ENCODE measurements at regions of chr1 and their contacts with region 1.

Region 1: DNA sequence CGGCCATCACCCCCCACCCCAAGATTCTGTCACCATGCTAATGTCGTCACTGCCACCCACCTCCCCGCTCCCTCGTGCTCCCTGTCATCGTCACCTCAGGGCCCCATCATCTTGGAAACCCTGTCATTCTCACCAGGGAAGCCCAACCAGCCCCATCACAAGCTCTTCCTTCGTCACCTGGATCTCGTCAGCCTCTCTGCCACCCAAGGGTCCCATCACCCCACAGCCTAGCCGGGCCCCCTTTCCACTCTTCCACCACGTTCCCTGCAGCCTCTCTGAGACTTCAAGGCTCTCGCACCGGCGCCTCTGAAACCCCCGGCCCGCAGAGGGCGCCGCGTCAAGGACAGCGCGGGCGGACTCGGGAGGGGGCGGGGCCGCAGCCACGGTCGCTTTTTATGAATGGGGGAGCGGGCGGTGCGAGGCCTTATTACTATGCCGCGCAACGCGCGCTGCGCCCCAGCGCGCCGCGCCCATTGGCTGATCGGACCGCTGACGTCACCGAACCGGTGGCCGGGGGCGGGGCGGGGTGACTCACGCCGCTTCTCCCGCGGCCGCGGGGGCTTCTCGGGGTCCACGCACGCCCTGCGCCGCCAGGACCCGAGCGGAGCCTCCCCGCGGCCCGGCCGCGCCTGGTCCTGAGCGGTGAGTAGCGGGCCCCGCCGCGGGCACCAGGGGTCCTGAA is at the start of gene GPR3:
- DNase-seq: peak; percentile 84
- H3K4me3 ChIP-seq: peak within 1 kb of the TSS; percentile 54 to 73 (median 64)
- H3K27ac ChIP-seq: peak within 1 kb of the TSS; percentile 86
- H3K4me1 ChIP-seq: peaks cover 26% of the 10 kb centered on the region
- H3K27me3 ChIP-seq: no peaks in the 10 kb centered on the region
- CTCF ChIP-seq: peak in 1 of 2 donors; percentile 54
- total RNA-seq, gene GPR3: 0.50 to 2.3 TPM

Region 2: DNA sequence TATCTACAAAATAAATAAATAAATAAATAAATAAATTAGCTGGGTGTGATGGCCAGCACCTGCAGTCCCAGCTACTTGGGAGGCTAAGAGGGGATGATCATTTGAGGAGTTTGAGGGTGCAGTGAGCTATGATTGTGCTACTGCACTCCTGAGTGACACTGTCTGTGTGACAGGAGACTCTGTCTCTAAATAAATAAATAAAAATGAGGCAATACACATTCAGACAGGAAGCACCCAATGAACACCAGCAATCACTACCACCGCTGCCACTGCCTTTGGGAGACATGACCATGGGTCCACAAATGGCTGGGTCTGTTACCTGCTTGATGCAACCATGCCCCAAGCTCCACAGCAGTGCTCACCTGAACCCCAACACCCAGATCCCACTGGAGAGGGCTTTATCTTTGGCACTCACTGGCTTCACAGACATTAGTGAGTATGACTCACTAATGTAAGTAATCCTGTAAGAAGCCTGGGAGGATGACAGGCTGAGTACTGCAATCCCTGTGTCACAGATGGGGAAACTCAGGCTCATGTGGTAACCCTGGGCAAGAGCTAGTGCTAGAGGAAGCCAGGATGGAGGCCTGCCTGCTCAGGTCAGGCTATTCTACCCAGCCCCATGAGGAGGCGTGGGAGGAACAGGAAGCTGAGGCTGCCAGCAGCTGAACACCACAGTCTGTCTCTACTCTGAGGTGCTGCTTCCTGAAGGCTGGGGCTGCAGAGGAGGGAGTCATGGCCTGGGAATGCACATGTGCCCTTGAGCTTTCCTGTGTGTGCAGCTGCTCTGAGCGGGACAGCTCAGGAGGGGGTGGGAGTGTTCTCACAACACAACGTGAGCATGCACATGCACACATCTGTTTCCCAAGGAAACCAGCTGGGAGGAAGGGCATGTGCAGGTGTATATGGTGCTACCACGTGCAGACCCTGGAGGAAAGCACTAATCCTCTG is 280.3 kb before region 1 on chr1:
- CTCF ChIA-PET with region 1: interaction called, 3 read pairs
- dilution Hi-C with region 1: no loop called
- in situ Hi-C with region 1: loop called in 1 of 2 experiments (anchors 25 kb)
- intact Hi-C with region 1: no loop called
- DNase-seq: peak; percentile 100
- H3K4me3 ChIP-seq: no peak overlapping the region
- H3K27ac ChIP-seq: peak overlapping the region; percentile 43
- H3K4me1 ChIP-seq: peaks cover 35% of the 10 kb centered on the region
- H3K27me3 ChIP-seq: no peaks in the 10 kb centered on the region
- CTCF ChIP-seq: peak; percentile 8 to 65

Region 3: GRCh38 chr1:27292106-27292505 is 100.1 kb before region 1 on chr1:
- CTCF ChIA-PET with region 1: no interaction called
- dilution Hi-C with region 1: loop called (anchors 5 kb)
- in situ Hi-C with region 1: no loop called
- intact Hi-C with region 1: no loop called
- DNase-seq: peak; percentile 45
- H3K4me3 ChIP-seq: no peak overlapping the region
- H3K27ac ChIP-seq: no peak overlapping the region
- H3K4me1 ChIP-seq: peaks cover 6% of the 10 kb centered on the region
- H3K27me3 ChIP-seq: no peaks in the 10 kb centered on the region
- CTCF ChIP-seq: no peak

Region 4: GRCh38 chr1:27332536-27333281 is 59.5 kb before region 1 on chr1:
- CTCF ChIA-PET with region 1: no interaction called
- dilution Hi-C with region 1: loop called (anchors 5 kb)
- in situ Hi-C with region 1: no loop called
- intact Hi-C with region 1: loop called (anchors 1 kb)
- DNase-seq: no peak
- H3K4me3 ChIP-seq: no peak overlapping the region
- H3K27ac ChIP-seq: no peak overlapping the region
- H3K4me1 ChIP-seq: no peaks in the 10 kb centered on the region
- H3K27me3 ChIP-seq: no peaks in the 10 kb centered on the region
- CTCF ChIP-seq: peak; percentile 86 to 90

Region 5: DNA sequence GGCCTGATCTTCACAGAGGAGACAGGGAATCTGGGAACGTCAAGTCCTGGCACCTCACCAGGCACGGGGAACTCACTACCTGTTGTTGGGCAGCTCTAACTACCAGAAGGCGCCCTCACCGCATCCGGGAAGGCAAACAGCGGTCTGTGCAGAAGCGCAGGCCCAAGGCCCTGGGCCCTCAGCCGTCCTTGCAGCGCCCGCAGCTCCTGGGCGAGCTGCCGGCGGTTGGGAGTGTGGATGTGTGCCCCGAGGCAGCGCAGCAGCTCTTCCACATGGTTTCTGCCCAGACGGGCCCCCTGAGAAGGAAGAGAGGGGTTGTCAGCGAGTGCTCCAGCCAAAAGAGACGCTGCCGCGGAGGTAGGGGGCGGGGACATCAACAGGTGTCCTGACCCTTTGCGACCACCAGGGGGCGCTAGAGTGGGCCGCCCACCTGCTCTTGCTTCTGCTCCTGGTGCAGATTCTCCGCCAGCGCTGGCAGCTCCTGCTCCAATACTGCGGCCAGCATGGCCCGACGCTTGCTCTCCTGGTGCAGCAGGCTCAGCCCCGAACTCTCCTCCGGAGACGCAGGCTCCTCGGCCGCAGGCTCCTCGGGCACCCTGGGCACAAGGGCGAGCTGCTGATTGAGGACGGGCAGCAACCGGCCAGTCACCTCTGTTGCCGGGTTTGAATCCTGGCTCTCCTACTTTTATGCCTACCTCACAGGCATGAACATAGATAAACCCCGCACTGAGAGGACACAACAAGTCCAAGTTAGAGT is 34.8 kb before region 1 on chr1:
- CTCF ChIA-PET with region 1: no interaction called
- dilution Hi-C with region 1: no loop called
- in situ Hi-C with region 1: no loop called
- intact Hi-C with region 1: loop called (anchors 1 kb)
- DNase-seq: no peak
- H3K4me3 ChIP-seq: no peak overlapping the region
- H3K27ac ChIP-seq: no peak overlapping the region
- H3K4me1 ChIP-seq: no peaks in the 10 kb centered on the region
- H3K27me3 ChIP-seq: no peaks in the 10 kb centered on the region
- CTCF ChIP-seq: peak; percentile 78 to 90

Region 6: DNA sequence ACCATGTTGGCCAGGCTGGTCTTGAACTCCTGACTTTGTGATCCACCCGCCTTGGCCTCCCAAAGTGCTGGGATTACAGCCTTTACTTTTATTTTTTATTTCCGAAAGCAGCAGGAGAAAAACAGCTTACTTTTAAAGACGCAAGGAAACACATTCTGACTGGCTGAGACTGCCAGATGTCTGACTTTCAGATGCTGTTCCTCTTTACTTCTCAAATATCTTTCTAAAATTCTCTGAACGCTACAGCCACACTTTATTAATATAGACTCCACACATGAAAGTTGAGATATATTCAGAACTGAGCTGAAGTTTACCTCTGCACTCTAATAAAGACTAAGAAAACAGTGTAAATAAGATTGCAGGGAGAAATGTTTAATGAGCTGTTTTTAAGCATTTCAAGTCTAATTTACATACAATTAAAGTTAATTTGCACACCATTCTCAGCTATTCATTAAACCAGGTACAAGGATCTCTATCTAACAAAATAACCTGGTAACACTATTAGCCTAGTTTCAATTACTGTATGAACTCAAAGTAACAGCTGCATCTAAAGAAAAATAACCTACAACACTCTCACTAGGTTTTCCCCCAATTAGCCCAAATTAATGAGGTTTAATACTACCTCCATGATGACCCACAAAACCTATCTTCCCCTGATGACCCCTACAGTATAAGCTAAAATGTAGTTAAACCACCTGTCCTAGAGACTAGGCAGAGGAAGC is 72.8 kb after region 1 on chr1:
- CTCF ChIA-PET with region 1: no interaction called
- dilution Hi-C with region 1: no loop called
- in situ Hi-C with region 1: no loop called
- intact Hi-C with region 1: no loop called
- DNase-seq: no peak
- H3K4me3 ChIP-seq: no peak overlapping the region
- H3K27ac ChIP-seq: no peak overlapping the region
- H3K4me1 ChIP-seq: peaks cover 4% of the 10 kb centered on the region
- H3K27me3 ChIP-seq: no peaks in the 10 kb centered on the region
- CTCF ChIP-seq: no peak

Region 7: DNA sequence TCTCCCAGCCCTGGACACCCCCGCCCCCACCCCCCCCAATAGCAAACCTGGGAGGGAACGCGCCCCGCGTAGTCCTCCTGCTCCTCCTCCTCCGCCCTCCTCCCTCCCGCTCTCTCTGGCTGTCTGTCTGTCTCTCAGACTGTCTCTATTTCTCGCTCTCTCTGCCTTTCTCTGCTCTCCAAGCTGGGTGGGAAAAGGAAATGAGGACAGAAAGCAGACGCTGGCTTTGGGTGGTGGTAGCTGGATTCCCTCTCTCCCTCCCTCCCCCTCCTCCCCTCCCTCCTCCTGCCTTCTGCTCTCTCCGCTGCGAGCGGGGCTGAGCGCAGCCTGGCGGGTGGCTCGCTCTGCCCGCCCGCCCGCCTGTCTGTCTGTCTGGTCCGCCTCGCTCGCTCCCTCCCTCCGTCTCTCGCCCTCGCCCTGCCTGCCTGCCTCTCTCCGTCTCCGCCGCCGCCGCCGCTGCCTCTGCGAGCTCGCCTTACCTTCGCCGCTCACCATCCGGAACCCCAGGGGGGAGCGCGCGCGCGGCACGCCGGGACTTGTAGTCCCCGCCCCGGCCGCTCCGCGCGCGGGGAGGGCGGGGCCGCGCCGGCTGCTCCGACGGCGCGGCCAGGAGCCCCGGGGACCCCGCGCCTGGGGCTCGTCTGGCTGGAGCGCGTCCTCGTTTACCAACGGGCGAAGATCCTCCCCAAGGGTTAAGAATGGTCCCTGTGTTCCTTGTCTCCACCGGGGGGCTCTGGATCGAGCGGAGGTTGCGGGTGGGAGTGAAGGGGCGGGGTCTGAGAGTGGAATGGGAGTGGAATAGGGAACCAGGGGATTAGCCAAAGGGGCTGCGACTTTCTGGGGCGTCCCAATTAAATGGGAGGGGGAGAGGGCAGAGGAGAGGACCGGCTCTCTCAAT is 211.7 kb after region 1 on chr1 and contains the start of gene AHDC1:
- CTCF ChIA-PET with region 1: interaction called, 7 read pairs
- dilution Hi-C with region 1: no loop called
- in situ Hi-C with region 1: no loop called
- intact Hi-C with region 1: loop called (anchors 1 kb)
- DNase-seq: peak; percentile 89
- H3K4me3 ChIP-seq: peak within 1 kb of the TSS; percentile 77 to 93 (median 78)
- H3K27ac ChIP-seq: peak within 1 kb of the TSS; percentile 33
- H3K4me1 ChIP-seq: peaks cover 44% of the 10 kb centered on the region
- H3K27me3 ChIP-seq: no peaks in the 10 kb centered on the region
- CTCF ChIP-seq: peak in 1 of 2 donors; percentile 14
- total RNA-seq, gene AHDC1: 35.3 to 51.8 TPM

Measured in mammary epithelial cell (primary cell).